Esophagus muscularis mucosa (tissue), 4 donors: ENCODE measurements at regions of chr11 and their contacts with region 1.

Region 1: GRCh38 chr11:86041975-86042378 is 26.9 kb downstream of the PICALM start:
- DNase-seq: no peak
- H3K4me3 ChIP-seq: peak overlapping the region; percentile 20 to 49 (median 31)
- H3K27ac ChIP-seq: peak overlapping the region; percentile 54 to 70 (median 68)
- H3K4me1 ChIP-seq: peaks cover 84 to 91% (median 89%) of the 10 kb centered on the region in 4 donors
- H3K27me3 ChIP-seq: no peaks in the 10 kb centered on the region
- CTCF ChIP-seq: peak; percentile 83 to 87 (median 86)
- EP300 ChIP-seq: no peak
- POLR2A ChIP-seq: no peak

Region 2: GRCh38 chr11:86197448-86197847 is 155.5 kb after region 1 on chr11:
- intact Hi-C with region 1: loop called (anchors 5 kb)
- DNase-seq: no peak
- H3K4me3 ChIP-seq: no peak overlapping the region
- H3K27ac ChIP-seq: no peak overlapping the region
- H3K4me1 ChIP-seq: peaks cover 13 to 49% (median 46%) of the 10 kb centered on the region in 4 donors
- H3K27me3 ChIP-seq: no peaks in the 10 kb centered on the region
- CTCF ChIP-seq: no peak
- EP300 ChIP-seq: no peak
- POLR2A ChIP-seq: no peak

Region 3: GRCh38 chr11:86218125-86219084 is 176.4 kb after region 1 on chr11:
- intact Hi-C with region 1: loop called (anchors 2 kb)
- DNase-seq: no peak
- H3K4me3 ChIP-seq: peak overlapping the region; percentile 19 to 45 (median 28)
- H3K27ac ChIP-seq: no peak overlapping the region
- H3K4me1 ChIP-seq: peaks cover 3 to 11% (median 9%) of the 10 kb centered on the region in 4 donors
- H3K27me3 ChIP-seq: no peaks in the 10 kb centered on the region
- CTCF ChIP-seq: peak; percentile 87 to 97 (median 88)
- EP300 ChIP-seq: no peak
- POLR2A ChIP-seq: no peak

Region 4: GRCh38 chr11:86291466-86292262 is 249.7 kb after region 1 on chr11:
- intact Hi-C with region 1: loop called (anchors 10 kb)
- DNase-seq: no peak
- H3K4me3 ChIP-seq: no peak overlapping the region
- H3K27ac ChIP-seq: no peak overlapping the region
- H3K4me1 ChIP-seq: peaks cover 0 to 2% (median 0%) of the 10 kb centered on the region in 4 donors
- H3K27me3 ChIP-seq: no peaks in the 10 kb centered on the region
- CTCF ChIP-seq: peak; percentile 32 to 64 (median 38)
- EP300 ChIP-seq: no peak
- POLR2A ChIP-seq: no peak